T-cell (primary cell): ENCODE measurements at regions of chr1 and their contacts with region 1.

Region 1: GRCh38 chr1:10494754-10495474 is 20.2 kb downstream of the PEX14 start:
- DNase-seq: peak; percentile 49 to 84 (median 74)
- ATAC-seq: peak; percentile 79 to 87 (median 84)
- H3K4me3 ChIP-seq: peak overlapping the region; percentile 59 to 64
- H3K4me3 Mint-ChIP-seq: peak overlapping the region; percentile 79 to 88 (median 82)
- H3K27ac ChIP-seq: peak overlapping the region; percentile 67
- H3K27ac Mint-ChIP-seq: peak overlapping the region; percentile 89 to 94
- H3K4me1 ChIP-seq: peaks cover 8 to 39% of the 10 kb centered on the region in 2 experiments
- H3K4me1 Mint-ChIP-seq: peaks cover 49 to 60% (median 52%) of the 10 kb centered on the region in 3 donors
- H3K27me3 ChIP-seq: no peaks in the 10 kb centered on the region
- H3K27me3 Mint-ChIP-seq: no peaks in the 10 kb centered on the region

Region 2: GRCh38 chr1:10324627-10325026 is 170.3 kb before region 1 on chr1:
- CTCF ChIA-PET with region 1: no interaction called
- POLR2A ChIA-PET with region 1: no interaction called
- DNase-seq: peak in 12 of 35 experiments; percentile 2 to 41 (median 6)
- ATAC-seq: peak; percentile 43 to 70 (median 60)
- H3K4me3 ChIP-seq: peak overlapping the region in 1 of 2 donors; percentile 11
- H3K4me3 Mint-ChIP-seq: peak overlapping the region; percentile 16 to 75 (median 40)
- H3K27ac ChIP-seq: peak overlapping the region; percentile 55
- H3K27ac Mint-ChIP-seq: peak overlapping the region; percentile 73 to 89
- H3K4me1 ChIP-seq: no peaks in the 10 kb centered on the region
- H3K4me1 Mint-ChIP-seq: peaks cover 0 to 16% (median 2%) of the 10 kb centered on the region in 3 donors
- H3K27me3 ChIP-seq: no peaks in the 10 kb centered on the region
- H3K27me3 Mint-ChIP-seq: no peaks in the 10 kb centered on the region

Region 3: GRCh38 chr1:10430216-10431069 is 64.5 kb before region 1 on chr1 and contains the start of gene CENPS:
- CTCF ChIA-PET with region 1: interaction called, 5 to 25 read pairs
- POLR2A ChIA-PET with region 1: no interaction called
- DNase-seq: peak; percentile 67 to 95 (median 83)
- ATAC-seq: peak; percentile 86 to 88 (median 87)
- H3K4me3 ChIP-seq: peak within 1 kb of the TSS; percentile 74 to 89
- H3K4me3 Mint-ChIP-seq: peak within 1 kb of the TSS; percentile 84 to 91 (median 85)
- H3K27ac ChIP-seq: peak within 1 kb of the TSS; percentile 73
- H3K27ac Mint-ChIP-seq: peak within 1 kb of the TSS; percentile 86 to 88
- H3K4me1 ChIP-seq: peaks cover 7 to 24% of the 10 kb centered on the region in 2 experiments
- H3K4me1 Mint-ChIP-seq: peaks cover 16 to 24% (median 23%) of the 10 kb centered on the region in 3 donors
- H3K27me3 ChIP-seq: no peaks in the 10 kb centered on the region
- H3K27me3 Mint-ChIP-seq: no peaks in the 10 kb centered on the region
- total RNA-seq, gene CENPS: 3.5 to 9.7 (median 5.8) TPM

Region 4: GRCh38 chr1:10507111-10507879 is 12.4 kb after region 1 on chr1:
- CTCF ChIA-PET with region 1: interaction called in 1 of 2 experiments, 68 read pairs
- POLR2A ChIA-PET with region 1: interaction called in 1 of 2 experiments, 3 read pairs
- DNase-seq: peak in 34 of 35 experiments; percentile 16 to 69 (median 44)
- ATAC-seq: peak; percentile 29 to 62 (median 35)
- H3K4me3 ChIP-seq: no peak overlapping the region
- H3K4me3 Mint-ChIP-seq: no peak overlapping the region
- H3K27ac ChIP-seq: no peak overlapping the region
- H3K27ac Mint-ChIP-seq: peak overlapping the region; percentile 78 to 79
- H3K4me1 ChIP-seq: peaks cover 23 to 43% of the 10 kb centered on the region in 2 experiments
- H3K4me1 Mint-ChIP-seq: peaks cover 43 to 58% (median 46%) of the 10 kb centered on the region in 3 donors
- H3K27me3 ChIP-seq: no peaks in the 10 kb centered on the region
- H3K27me3 Mint-ChIP-seq: no peaks in the 10 kb centered on the region

Region 5: DNA sequence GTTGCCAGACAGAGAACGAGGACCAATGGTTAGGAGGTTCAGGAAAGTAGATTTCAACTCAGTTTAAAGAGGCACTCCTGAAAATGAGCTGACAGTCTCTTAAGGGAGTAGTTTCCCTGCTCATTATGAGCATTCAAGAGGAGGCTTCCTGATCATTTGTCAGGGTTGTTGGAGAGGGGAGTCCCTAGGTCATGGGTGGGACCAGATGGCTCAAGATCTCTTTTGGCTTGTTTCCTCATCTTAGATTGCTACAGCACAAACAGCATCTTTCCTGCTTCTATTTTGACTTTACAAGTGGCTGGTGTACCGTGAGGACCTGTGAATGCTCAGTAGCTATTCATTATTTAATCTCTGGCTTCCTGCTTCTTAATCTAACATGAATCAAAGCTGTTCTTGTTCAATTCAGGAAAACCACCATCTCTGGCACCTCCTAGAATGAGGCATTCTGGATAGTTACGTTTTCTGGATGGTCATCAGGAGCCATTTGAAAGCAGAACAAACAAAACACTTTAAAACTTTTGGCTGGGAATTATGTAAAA is 27.5 kb after region 1 on chr1:
- CTCF ChIA-PET with region 1: interaction called in 1 of 2 experiments, 11 read pairs
- POLR2A ChIA-PET with region 1: no interaction called
- DNase-seq: no peak
- ATAC-seq: no peak
- H3K4me3 ChIP-seq: no peak overlapping the region
- H3K4me3 Mint-ChIP-seq: no peak overlapping the region
- H3K27ac ChIP-seq: no peak overlapping the region
- H3K27ac Mint-ChIP-seq: peak overlapping the region in 1 of 2 donors; percentile 30
- H3K4me1 ChIP-seq: peaks cover 0 to 21% of the 10 kb centered on the region in 2 experiments
- H3K4me1 Mint-ChIP-seq: peaks cover 42 to 56% (median 52%) of the 10 kb centered on the region in 3 donors
- H3K27me3 ChIP-seq: no peaks in the 10 kb centered on the region
- H3K27me3 Mint-ChIP-seq: no peaks in the 10 kb centered on the region

Region 6: DNA sequence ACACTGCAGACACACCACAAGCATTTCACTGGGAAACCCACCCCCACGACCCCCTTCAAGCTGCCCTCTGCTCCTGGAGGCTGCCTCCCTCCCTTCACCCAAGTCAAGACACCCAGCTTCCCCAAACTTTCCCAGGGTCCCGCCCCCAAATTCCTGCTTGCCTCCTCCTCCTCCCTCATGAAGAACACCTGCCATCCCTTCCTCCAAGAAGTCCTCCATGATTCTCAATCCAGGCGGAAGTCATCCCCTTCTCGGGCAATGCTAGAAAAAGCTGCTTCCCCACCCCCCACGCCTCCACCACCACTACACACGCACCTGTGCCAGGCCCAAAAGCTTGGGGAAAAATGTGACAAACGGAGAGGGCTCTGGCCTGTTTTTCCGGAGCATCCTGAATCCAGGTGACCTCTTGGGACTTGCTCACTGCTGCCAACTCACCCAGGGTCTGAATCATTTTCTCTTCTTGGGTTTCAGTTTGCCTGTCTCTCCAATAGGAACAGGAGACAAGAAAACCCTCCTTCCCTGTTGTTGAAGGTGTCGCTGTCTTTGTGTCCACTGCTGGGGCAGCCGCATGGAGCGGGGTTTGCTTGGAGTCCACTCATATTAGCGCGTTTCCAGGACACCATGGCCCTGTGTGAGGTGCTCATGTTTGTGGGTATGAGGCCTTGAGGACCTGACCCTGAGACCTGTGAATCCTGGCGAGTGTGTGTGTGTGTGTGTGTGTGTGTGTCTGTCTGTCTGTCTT is 402.6 kb after region 1 on chr1:
- CTCF ChIA-PET with region 1: no interaction called
- POLR2A ChIA-PET with region 1: no interaction called
- DNase-seq: no peak
- ATAC-seq: no peak
- H3K4me3 ChIP-seq: no peak overlapping the region
- H3K4me3 Mint-ChIP-seq: no peak overlapping the region
- H3K27ac ChIP-seq: no peak overlapping the region
- H3K27ac Mint-ChIP-seq: no peak overlapping the region
- H3K4me1 ChIP-seq: peaks cover 0 to 2% of the 10 kb centered on the region in 2 experiments
- H3K4me1 Mint-ChIP-seq: peaks cover 0 to 5% (median 0%) of the 10 kb centered on the region in 3 donors
- H3K27me3 ChIP-seq: peaks cover 0 to 28% of the 10 kb centered on the region in 2 experiments
- H3K27me3 Mint-ChIP-seq: peaks cover under 1 to 7% of the 10 kb centered on the region in 2 donors